ENCODE measurements at regions of chr6 and their contacts with region 1.

Region 1: DNA sequence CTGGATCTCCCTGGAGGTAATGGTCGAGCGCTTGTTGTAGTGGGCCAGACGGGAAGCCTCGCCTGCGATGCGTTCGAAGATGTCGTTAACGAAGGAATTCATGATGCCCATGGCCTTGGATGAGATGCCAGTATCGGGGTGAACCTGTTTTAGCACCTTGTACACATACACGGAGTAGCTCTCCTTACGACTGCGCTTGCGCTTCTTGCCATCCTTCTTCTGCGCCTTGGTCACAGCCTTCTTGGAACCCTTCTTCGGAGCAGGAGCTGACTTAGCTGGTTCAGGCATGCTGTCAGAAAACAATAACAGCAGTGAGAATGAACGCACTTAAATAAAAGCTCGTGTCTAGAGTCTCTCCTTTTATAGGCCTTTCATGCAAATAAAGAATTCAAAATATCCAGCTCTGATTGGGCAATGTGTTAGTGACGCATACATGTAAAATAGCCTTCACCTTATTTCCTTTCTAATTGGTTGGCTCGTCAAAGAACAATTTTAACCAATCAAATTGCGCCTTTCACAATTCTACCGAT is 129.2 kb downstream of the HFE start:
- DNase-seq: peak; percentile 100
- H3K4me3 ChIP-seq: peak overlapping the region; percentile 59
- H3K27me3 ChIP-seq: no peaks in the 10 kb centered on the region
- CTCF ChIP-seq: no peak

Region 2: DNA sequence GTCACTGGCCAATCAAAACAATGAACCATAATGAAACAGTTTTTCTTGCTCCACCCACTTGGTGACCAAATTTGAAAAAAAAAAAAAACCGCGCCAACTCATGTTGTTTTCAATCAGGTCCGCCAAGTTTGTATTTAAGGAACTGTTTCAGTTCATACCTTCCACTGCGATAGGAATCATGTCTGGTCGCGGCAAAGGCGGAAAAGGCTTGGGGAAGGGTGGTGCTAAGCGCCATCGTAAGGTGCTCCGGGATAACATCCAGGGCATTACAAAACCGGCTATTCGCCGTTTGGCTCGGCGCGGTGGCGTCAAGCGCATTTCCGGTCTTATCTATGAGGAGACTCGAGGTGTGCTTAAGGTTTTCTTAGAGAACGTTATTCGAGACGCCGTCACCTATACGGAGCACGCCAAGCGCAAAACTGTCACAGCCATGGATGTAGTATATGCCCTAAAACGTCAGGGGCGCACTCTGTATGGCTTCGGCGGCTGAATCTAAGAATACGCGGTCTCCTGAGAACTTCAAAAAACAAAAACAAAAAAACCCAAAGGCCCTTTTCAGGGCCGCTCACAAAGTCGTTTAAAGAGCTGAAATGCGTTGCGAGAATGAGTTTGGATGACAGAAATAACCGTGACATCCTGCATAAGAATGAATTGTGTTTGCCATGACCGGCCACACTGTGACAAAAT is 112.5 kb before region 1 on chr6:
- CTCF ChIA-PET with region 1: interaction called, 5 read pairs
- POLR2A ChIA-PET with region 1: interaction called, 20 read pairs
- DNase-seq: peak; percentile 83
- H3K4me3 ChIP-seq: peak overlapping the region; percentile 43
- H3K27me3 ChIP-seq: no peaks in the 10 kb centered on the region
- CTCF ChIP-seq: peak; percentile 61

Region 3: DNA sequence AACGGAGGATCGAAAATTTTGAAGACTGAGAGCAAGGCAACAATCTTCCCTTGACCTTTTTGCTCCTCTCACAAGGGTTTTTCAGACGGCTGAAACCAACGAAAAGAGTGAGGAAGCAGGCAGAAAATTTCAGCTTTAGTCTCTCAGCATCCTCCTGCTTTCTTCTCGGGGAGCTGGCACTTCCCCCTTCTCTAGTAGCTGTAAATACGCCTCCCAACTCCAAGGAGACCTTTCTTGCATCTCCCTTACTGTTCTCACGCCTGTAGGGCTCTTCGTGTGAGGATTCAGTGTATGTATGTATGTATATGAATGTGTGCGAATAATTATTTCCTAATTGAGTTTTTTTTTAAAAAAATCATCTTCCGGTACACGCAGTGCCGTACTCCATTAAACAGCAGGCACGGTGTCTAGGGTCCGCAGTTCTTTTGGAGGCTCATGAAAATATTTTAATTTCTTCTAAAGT is 43.9 kb before region 1 on chr6:
- CTCF ChIA-PET with region 1: no interaction called
- POLR2A ChIA-PET with region 1: interaction called, 11 read pairs
- DNase-seq: no peak
- H3K4me3 ChIP-seq: peak overlapping the region; percentile 46
- H3K27me3 ChIP-seq: no peaks in the 10 kb centered on the region
- CTCF ChIP-seq: no peak

Region 4: DNA sequence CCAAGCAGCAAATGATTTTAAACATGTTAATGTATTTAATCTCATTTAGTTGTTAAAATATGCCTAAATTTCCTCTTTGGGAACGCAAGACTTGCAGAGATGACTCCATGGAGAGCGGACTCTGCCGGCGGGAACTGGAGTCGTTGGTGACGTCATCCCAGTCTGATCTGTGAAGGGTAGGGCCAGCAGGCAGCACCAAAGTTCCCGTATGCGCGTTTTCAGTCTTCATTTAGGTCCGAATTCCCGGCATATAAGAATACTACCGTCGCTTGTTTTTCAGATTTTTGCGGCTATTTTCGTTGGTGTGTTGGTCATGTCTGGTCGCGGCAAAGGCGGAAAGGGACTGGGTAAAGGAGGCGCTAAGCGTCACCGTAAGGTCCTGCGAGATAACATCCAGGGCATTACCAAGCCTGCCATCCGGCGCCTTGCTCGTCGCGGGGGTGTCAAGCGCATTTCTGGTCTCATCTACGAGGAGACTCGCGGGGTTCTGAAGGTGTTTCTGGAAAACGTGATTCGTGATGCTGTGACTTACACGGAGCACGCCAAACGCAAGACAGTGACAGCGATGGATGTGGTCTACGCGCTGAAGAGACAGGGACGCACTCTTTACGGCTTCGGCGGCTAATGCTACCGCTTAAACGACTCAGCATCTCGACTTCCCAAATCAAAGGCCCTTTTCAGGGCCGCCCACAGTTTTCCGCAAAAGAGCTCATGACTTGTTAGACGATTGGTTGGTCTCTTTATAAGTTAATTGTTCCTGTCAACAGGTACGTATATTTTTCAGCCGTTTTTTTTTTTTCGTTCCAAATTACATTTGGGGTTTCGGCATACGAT is 11.9 kb before region 1 on chr6:
- CTCF ChIA-PET with region 1: interaction called, 5 read pairs
- POLR2A ChIA-PET with region 1: interaction called, 74 read pairs
- DNase-seq: peak; percentile 94
- H3K4me3 ChIP-seq: peak overlapping the region; percentile 76
- H3K27me3 ChIP-seq: no peaks in the 10 kb centered on the region
- CTCF ChIP-seq: peak; percentile 56; the same call in 1 of the 2 replicates

Region 5: DNA sequence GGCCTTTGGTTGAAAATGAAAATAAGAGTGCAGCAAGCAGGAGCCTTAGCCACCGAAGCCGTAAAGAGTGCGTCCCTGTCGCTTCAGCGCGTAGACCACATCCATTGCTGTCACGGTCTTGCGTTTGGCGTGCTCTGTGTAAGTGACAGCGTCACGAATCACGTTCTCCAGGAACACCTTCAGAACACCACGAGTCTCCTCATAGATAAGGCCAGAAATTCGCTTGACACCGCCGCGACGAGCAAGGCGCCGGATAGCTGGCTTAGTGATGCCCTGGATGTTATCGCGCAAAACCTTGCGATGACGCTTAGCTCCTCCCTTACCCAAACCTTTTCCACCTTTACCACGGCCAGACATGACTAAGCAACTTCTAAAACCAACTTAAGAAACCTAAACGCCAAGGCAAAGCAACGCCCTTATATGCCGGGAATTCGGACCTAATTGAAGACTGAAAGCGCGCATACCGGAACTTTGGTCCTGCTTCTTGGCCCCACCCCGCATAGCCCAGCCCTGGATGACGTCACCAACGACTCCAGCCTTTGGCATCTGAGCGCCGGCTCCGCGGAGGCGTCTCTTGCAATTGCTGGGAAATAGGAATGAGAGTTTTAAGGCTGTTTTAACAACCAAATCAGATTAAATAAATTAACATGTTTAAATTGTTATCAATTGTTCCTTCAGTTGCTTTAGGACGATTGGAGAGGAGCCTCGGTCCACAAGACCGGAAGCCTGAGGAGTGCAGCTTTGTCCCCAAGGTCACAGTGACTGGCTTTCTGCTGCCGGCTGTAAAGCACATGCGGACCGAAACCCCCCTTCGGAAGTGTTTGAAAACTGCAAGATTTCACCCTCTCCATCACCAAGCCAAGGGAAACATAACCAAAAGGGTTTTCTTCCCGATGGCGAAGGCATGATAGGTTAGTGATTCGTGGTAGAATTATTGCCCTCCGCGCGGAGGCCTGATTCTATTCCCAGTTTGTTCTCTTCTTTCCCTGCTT is 69.0 kb after region 1 on chr6:
- CTCF ChIA-PET with region 1: interaction called, 3 read pairs
- POLR2A ChIA-PET with region 1: interaction called, 27 read pairs
- DNase-seq: peak; percentile 97
- H3K4me3 ChIP-seq: peak overlapping the region; percentile 46
- H3K27me3 ChIP-seq: no peaks in the 10 kb centered on the region
- CTCF ChIP-seq: no peak